ENCODE measurements at regions of chr2 and their contacts with region 1.

Region 1: GRCh38 chr2:20224716-20225293 is at the start of gene SDC1:
- DNase-seq: peak; percentile 44 to 77 (median 68)
- H3K4me3 ChIP-seq: peak within 1 kb of the TSS; percentile 47
- H3K27ac ChIP-seq: peak within 1 kb of the TSS; percentile 47 to 61
- H3K4me1 ChIP-seq: peaks cover 2% of the 10 kb centered on the region
- H3K27me3 ChIP-seq: no peaks in the 10 kb centered on the region
- CTCF ChIP-seq: peak in 1 of 3 donors; percentile 7
- EP300 ChIP-seq: no peak
- POLR2A ChIP-seq: no peak
- total RNA-seq, gene SDC1: 2.3 to 9.1 (median 4.2) TPM

Region 2: GRCh38 chr2:20135631-20136050 is 89.2 kb before region 1 on chr2:
- intact Hi-C with region 1: loop called in 2 of 4 experiments (anchors 5 kb)
- DNase-seq: peak; percentile 58 to 85 (median 68)
- H3K4me3 ChIP-seq: no peak overlapping the region
- H3K27ac ChIP-seq: no peak overlapping the region
- H3K4me1 ChIP-seq: peaks cover 6% of the 10 kb centered on the region
- H3K27me3 ChIP-seq: no peaks in the 10 kb centered on the region
- CTCF ChIP-seq: peak; percentile 35 to 64 (median 45)
- EP300 ChIP-seq: no peak
- POLR2A ChIP-seq: no peak

Region 3: GRCh38 chr2:20141122-20141762 is 83.6 kb before region 1 on chr2:
- intact Hi-C with region 1: loop called in 2 of 4 experiments (anchors 5 kb)
- DNase-seq: peak in 2 of 5 donors; percentile 44 to 47
- H3K4me3 ChIP-seq: no peak overlapping the region
- H3K27ac ChIP-seq: no peak overlapping the region
- H3K4me1 ChIP-seq: peaks cover 6% of the 10 kb centered on the region
- H3K27me3 ChIP-seq: no peaks in the 10 kb centered on the region
- CTCF ChIP-seq: no peak
- EP300 ChIP-seq: no peak
- POLR2A ChIP-seq: no peak